HEK293 (cell line): ENCODE measurements at regions of chr6 and their contacts with region 1.

Region 1: GRCh38 chr6:46032110-46032998 is 16.7 kb upstream of the CLIC5 start:
- H3K4me3 ChIP-seq: no peak overlapping the region
- H3K27ac ChIP-seq: no peak overlapping the region
- H3K4me1 ChIP-seq: no peaks in the 10 kb centered on the region
- CTCF ChIP-seq: no peak

Region 2: DNA sequence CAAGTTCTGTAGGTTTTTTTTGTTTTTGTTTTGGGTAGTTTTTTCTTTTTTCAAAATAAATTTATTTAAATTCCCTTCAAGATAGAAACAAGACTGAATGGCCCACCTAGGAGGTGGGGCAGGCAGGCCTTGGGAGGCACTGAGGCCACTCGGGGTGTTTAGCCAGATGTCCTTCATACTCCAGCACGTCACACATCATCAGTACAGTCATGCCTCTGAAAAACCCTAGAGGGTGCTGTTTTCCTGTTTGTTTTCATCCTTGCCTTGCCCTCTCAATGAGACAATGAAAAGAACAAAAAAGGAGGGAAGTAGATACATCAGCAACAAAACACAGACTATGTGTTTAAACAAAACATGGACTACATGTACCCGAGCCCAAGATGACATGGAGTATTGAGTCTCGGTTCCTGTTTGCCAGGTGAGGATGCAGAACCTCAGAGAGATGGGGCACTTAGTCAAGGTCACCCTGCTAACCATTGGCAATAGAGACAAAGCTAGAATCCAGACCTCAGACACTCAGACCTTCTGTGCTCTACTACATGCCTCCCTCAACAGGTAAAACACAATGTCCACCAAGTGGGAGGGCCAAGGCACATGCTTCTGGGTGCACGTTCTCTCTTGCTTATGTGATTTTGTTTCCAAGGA is 10.1 kb after region 1 on chr6:
- CTCF ChIA-PET with region 1: interaction called, 13 read pairs
- POLR2A ChIA-PET with region 1: interaction called, 3 read pairs
- H3K4me3 ChIP-seq: no peak overlapping the region
- H3K27ac ChIP-seq: no peak overlapping the region
- H3K4me1 ChIP-seq: peaks cover 7% of the 10 kb centered on the region
- CTCF ChIP-seq: peak; percentile 63